AG04450 (cell line): ENCODE measurements at regions of chr12 and their contacts with region 1.

Region 1: DNA sequence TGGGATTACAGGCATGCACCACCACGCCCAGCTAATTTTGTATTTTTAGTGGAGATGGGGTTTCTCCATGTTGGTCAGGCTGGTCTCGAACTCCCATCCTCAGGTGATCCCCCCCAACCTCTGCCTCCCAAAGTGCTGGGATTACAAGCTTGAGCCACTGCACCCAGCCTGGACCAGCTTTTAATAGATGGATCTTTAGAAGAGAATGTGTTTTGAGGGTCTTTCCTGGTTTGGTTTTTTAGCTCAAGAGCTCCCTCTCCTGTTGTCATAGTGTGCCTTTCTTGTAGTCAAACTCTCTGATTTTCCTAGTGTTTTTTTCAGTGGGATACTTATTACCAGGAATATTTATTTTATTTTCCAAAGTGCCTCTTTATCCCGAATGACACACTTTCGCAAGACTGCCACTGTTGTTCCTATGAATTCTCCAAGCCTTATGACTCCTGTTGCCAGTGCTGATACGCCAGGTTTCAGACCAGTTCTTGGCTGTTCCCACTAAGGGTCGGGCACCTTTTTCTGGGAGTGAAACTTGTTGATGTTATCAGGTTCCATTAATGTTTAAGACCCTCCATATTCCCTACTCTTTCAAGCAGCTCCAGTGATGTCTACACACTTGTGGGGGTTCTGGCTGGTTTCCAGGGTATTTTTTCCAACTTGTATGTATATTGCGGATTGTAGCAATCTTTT is 31.5 kb upstream of the LIMA1 start:
- DNase-seq: peak; percentile 38
- H3K4me3 ChIP-seq: no peak overlapping the region
- H3K27ac ChIP-seq: no peak overlapping the region
- H3K27me3 ChIP-seq: no peaks in the 10 kb centered on the region
- CTCF ChIP-seq: peak; percentile 81

Region 2: GRCh38 chr12:50111693-50112455 is 202.9 kb before region 1 on chr12 and contains the start of gene COX14:
- CTCF ChIA-PET with region 1: interaction called, 11 read pairs
- POLR2A ChIA-PET with region 1: no interaction called
- DNase-seq: peak; percentile 99
- H3K4me3 ChIP-seq: peak within 1 kb of the TSS; percentile 99
- H3K27ac ChIP-seq: peak within 1 kb of the TSS; percentile 96
- H3K27me3 ChIP-seq: no peaks in the 10 kb centered on the region
- CTCF ChIP-seq: peak; percentile 92
- polyA plus RNA-seq, gene COX14: 77.0 and 90.6 TPM in 2 replicates

Region 3: DNA sequence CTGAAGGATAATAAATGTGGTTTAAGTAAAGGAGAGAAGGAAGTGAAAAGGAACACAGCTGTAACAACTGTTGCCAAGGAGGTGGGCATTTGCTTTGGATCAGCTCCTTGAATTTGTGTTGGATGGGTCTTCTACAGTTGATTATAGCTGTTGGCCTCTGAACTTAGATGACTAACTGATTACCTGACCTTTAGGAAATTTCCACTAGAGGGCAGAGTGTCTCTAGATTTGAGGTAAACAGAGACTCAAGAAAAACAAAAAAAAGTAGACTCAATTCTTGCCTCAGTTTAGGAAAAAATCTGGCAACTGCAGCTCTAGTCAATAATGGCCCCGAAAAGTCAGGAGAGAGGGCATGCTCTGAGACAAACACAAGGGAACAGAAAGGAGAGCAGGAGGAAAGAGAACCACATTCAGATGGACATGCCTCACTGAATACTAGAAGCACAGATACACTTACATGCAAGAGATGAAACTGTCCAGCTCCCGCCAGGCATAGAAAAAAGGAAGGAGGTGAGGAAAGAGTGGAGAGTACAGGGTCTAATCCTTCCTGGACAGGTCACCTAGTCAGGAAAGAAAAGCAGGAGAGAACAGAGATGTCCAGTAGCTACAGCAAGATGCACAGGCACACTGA is 182.2 kb before region 1 on chr12:
- CTCF ChIA-PET with region 1: interaction called, 23 read pairs
- POLR2A ChIA-PET with region 1: no interaction called
- DNase-seq: no peak
- H3K4me3 ChIP-seq: no peak overlapping the region
- H3K27ac ChIP-seq: no peak overlapping the region
- H3K27me3 ChIP-seq: no peaks in the 10 kb centered on the region
- CTCF ChIP-seq: peak; percentile 36

Region 4: GRCh38 chr12:50187084-50187900 is 127.5 kb before region 1 on chr12:
- CTCF ChIA-PET with region 1: interaction called, 34 read pairs
- POLR2A ChIA-PET with region 1: no interaction called
- DNase-seq: peak; percentile 83
- H3K4me3 ChIP-seq: no peak overlapping the region
- H3K27ac ChIP-seq: peak overlapping the region; percentile 98
- H3K27me3 ChIP-seq: no peaks in the 10 kb centered on the region
- CTCF ChIP-seq: no peak

Region 5: DNA sequence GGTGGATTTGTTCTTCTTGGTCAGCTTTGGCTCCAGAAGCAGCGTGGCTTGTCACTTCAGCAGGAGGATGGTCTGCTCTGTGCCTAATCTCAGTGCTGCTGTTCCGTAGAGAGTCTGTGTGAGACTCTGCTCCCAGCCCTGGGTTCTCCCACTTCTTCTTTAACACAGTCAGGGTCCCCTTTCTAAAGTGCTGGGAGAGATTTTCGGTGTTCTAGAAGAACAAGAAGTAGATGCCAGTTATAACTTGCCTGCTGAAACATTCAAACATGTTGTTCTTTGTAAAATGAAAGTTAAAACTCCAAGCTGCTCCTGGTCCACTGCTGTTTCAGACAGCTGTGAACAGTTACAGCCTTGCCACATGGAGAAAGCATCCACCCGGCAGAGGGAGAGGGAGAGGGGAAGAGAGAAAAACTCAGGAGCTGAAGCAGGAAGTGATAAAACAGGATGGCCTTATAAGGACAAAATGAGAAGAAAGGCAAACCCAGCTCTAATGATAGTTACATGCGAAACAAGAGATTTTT is 92.4 kb before region 1 on chr12:
- CTCF ChIA-PET with region 1: interaction called, 12 read pairs
- POLR2A ChIA-PET with region 1: interaction called, 10 read pairs
- DNase-seq: peak; percentile 89
- H3K4me3 ChIP-seq: peak overlapping the region; percentile 93
- H3K27ac ChIP-seq: peak overlapping the region; percentile 97
- H3K27me3 ChIP-seq: no peaks in the 10 kb centered on the region
- CTCF ChIP-seq: peak; percentile 58

Region 6: DNA sequence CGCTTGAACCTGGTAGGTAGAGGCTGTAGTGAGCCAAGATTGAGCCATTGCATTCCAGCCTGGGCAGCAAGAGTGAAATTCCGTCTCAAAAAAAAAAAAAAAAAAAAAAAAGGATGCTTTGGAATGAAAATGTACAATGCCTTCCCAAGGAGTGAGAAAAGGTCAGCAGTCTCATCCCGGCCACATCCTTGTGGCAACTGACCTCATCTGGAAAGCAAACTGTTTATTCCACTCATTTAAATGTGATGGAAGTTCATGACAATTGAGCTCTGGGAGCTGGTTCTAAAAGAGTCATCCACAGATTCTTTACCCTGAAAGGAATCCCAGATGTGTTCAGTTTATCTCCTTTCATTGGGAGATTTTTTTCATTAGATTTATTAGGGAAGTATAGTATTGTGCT is 12.1 kb before region 1 on chr12:
- CTCF ChIA-PET with region 1: interaction called, 15 read pairs
- POLR2A ChIA-PET with region 1: interaction called, 18 read pairs
- DNase-seq: no peak
- H3K4me3 ChIP-seq: no peak overlapping the region
- H3K27ac ChIP-seq: no peak overlapping the region
- H3K27me3 ChIP-seq: no peaks in the 10 kb centered on the region
- CTCF ChIP-seq: no peak

Region 7: GRCh38 chr12:50458606-50459005 is 143.8 kb after region 1 on chr12:
- CTCF ChIA-PET with region 1: no interaction called
- POLR2A ChIA-PET with region 1: no interaction called
- DNase-seq: no peak
- H3K4me3 ChIP-seq: no peak overlapping the region
- H3K27ac ChIP-seq: no peak overlapping the region
- H3K27me3 ChIP-seq: no peaks in the 10 kb centered on the region
- CTCF ChIP-seq: no peak

Region 8: DNA sequence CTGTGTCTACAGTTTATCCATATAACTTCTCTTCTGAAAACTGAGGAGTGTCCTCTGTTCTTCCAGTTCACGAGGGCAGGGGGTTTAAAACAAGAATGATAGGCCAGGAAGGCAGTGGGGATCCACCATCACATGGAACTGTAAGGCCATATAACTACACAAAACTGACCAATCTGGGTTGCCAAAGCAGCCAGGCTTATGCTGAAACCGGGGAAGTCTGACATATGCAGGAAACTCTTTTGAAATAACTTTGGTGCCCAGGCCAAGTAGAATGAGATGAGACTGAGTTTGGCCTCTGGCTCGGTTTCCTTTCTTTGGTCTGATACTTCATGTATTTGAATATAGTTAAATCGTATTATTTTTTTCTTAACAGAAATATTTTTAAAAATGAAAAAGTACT is 431.1 kb after region 1 on chr12:
- CTCF ChIA-PET with region 1: no interaction called
- POLR2A ChIA-PET with region 1: no interaction called
- DNase-seq: no peak
- H3K4me3 ChIP-seq: no peak overlapping the region
- H3K27ac ChIP-seq: no peak overlapping the region
- H3K27me3 ChIP-seq: no peaks in the 10 kb centered on the region
- CTCF ChIP-seq: no peak

Region 9: GRCh38 chr12:50992819-50993218 is 678.0 kb after region 1 on chr12:
- CTCF ChIA-PET with region 1: no interaction called
- POLR2A ChIA-PET with region 1: no interaction called
- DNase-seq: no peak
- H3K4me3 ChIP-seq: no peak overlapping the region
- H3K27ac ChIP-seq: no peak overlapping the region
- H3K27me3 ChIP-seq: no peaks in the 10 kb centered on the region
- CTCF ChIP-seq: no peak